Activated T-helper 1 cell treated with anti-CD3 and anti-CD28 coated beads, Interleukin-12 subunit alpha, Interleukin-12 subunit beta, Interleukin-2, Interleukin-4 antibody, amounts not matched to agents 30 ng/mL and 10 ng/mL and 1 ng/mL, durations not matched to agents 14 hours and 24 hours and 36 hours (primary cell): ENCODE measurements at regions of chr11 and their contacts with region 1.

Region 1: GRCh38 chr11:86291466-86292262 is 10.4 kb upstream of the HIKESHI start:
- DNase-seq: peak; percentile 39
- H3K4me3 Mint-ChIP-seq: peak overlapping the region; percentile 34
- H3K27ac Mint-ChIP-seq: peak overlapping the region; percentile 82
- H3K4me1 Mint-ChIP-seq: peaks cover 61% of the 10 kb centered on the region
- H3K27me3 Mint-ChIP-seq: no peaks in the 10 kb centered on the region

Region 2: DNA sequence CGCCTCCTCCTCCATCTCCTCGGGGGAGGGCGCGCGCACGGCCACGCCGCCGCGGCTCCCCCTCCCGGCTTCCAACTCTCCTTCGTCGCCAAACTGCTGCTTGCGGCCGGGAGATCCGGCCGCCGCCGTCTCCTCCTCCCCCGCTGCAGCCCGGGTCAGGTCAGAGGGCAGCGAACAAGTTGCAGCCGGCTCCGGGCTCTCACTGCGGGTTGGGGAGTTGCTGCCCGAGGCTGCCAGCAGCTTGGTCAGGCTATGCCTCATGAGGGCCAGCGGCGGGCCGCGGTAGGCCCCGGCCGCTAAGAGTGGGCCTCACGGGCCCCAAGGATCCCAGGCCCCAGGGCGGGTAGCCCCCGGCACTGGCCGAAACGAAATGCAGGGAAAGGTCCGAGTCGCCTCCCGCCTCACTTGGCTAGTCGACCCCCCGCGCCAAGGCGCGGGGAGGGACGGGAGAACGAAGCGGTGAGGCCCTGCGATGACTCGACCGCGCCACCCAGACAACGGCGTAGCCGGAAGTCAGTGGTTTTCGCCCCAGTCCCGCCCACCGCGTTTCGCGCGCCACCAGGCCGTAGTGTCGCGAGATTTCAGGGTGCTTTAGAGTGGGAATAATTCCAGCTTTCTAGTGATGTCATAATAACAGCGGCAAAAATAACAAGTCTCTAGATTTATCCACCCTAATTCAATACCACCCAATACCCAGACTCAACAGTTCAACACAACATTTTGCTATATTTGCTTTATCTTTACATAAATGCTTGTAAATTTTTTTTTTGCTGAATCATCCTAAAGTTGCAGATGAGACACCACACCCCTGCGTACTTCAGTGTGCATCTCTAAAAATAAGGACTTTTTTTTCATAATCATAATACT is 626.8 kb before region 1 on chr11 and contains the start of gene CREBZF:
- intact Hi-C with region 1: loop called (anchors 10 kb)
- DNase-seq: peak; percentile 94
- H3K4me3 Mint-ChIP-seq: peak within 1 kb of the TSS; percentile 99
- H3K27ac Mint-ChIP-seq: peak within 1 kb of the TSS; percentile 97
- H3K4me1 Mint-ChIP-seq: peaks cover 51% of the 10 kb centered on the region
- H3K27me3 Mint-ChIP-seq: no peaks in the 10 kb centered on the region
- total RNA-seq, gene CREBZF: 52.0 and 55.9 TPM in 2 replicates

Region 3: GRCh38 chr11:85941380-85941973 is 350.2 kb before region 1 on chr11:
- intact Hi-C with region 1: loop called (anchors 1 kb)
- DNase-seq: peak; percentile 11
- H3K4me3 Mint-ChIP-seq: no peak overlapping the region
- H3K27ac Mint-ChIP-seq: no peak overlapping the region
- H3K4me1 Mint-ChIP-seq: peaks cover 15% of the 10 kb centered on the region
- H3K27me3 Mint-ChIP-seq: no peaks in the 10 kb centered on the region

Region 4: GRCh38 chr11:86068951-86069407 is 222.7 kb before region 1 on chr11 and contains the start of gene PICALM:
- intact Hi-C with region 1: loop called (anchors 2 kb)
- DNase-seq: peak; percentile 97
- H3K4me3 Mint-ChIP-seq: peak within 1 kb of the TSS; percentile 92
- H3K27ac Mint-ChIP-seq: peak within 1 kb of the TSS; percentile 97
- H3K4me1 Mint-ChIP-seq: peaks cover 33% of the 10 kb centered on the region
- H3K27me3 Mint-ChIP-seq: no peaks in the 10 kb centered on the region
- total RNA-seq, gene PICALM: 174 and 177 TPM in 2 replicates

Region 5: DNA sequence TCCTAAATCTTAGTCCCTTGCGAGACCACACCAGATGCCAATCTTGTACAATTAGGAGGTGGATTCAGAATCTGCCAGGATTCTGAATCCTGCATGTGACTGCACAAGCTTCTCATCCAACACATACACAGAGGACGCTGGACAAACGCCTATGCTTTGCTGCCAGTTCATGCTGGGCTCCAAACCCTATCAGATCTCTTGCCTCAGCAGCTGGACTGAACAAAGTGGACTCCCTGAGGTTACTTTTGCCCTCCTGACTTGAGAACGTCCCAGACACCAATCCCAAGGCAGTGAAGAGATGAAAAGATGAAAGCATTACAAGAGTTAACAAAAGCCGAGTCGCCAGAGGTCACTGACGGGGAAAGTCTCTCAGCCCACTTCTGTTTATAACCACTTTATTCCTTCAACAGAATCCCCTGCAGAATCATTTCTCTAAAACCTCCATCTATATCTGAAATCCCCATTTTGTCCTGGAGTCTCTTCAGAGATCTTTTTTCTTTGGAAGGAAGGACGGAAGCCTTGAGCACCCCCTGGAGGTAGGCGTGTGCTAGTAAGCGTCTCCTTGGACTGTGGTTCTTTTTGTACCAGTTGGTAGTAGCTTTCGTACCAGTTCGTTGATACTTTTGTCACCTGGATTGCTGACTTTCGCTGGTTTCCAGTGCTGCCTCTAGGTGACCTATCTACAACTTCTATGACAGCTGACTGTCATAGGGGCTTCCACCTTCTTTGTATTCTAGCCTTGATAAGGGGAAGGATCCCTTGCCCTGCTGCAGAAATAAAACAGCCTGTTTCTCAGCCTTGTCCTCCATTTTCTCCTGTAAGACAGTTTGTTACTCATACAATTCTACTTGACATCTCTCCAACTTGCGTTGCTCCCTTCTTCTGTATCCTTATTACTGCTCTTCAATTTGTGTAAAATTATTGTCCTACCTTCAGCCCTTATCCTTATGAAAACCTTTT is 73.3 kb before region 1 on chr11:
- intact Hi-C with region 1: loop called (anchors 1 kb)
- DNase-seq: peak; percentile 42
- H3K4me3 Mint-ChIP-seq: peak overlapping the region; percentile 40
- H3K27ac Mint-ChIP-seq: peak overlapping the region; percentile 81
- H3K4me1 Mint-ChIP-seq: peaks cover 81% of the 10 kb centered on the region
- H3K27me3 Mint-ChIP-seq: no peaks in the 10 kb centered on the region

Region 6: DNA sequence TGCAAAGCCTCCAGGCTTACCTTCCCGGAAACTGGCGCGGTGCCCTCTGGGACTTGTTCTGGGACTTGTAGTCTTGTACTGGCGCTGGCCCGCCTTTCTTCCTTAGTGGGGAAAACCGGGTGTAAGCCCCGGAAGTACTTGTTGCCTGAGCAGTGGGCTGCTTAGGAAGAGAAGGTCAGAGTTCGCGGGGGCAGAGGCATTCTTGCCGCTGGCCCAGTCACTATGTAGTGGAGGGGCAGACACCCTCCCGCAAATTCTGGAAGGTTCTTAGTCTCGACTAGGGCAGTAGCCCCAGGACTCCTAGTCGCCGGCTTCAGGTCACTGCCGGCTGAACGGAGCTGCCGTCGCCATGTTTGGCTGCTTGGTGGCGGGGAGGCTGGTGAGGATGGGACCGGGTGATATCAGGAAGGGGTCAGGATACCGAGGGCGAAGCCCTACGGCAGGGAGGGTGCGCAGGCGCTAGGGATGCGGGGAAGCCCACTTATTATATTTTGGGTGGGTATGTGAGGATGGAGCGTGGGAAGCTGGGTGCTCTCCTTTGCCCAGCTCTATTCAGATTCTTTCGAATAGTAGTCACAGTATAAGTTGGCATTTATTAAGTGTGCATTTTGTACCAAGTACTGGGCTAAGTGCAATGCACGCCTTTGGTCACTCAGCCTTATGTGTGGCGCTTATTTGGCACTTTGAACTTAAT is 10.6 kb after region 1 on chr11 and contains the start of gene HIKESHI:
- intact Hi-C with region 1: loop called (anchors 1 kb)
- DNase-seq: peak; percentile 83
- H3K4me3 Mint-ChIP-seq: peak within 1 kb of the TSS; percentile 100
- H3K27ac Mint-ChIP-seq: peak within 1 kb of the TSS; percentile 97
- H3K4me1 Mint-ChIP-seq: peaks cover 28% of the 10 kb centered on the region
- H3K27me3 Mint-ChIP-seq: no peaks in the 10 kb centered on the region
- total RNA-seq, gene HIKESHI: 54.2 and 56.4 TPM in 2 replicates

Region 7: DNA sequence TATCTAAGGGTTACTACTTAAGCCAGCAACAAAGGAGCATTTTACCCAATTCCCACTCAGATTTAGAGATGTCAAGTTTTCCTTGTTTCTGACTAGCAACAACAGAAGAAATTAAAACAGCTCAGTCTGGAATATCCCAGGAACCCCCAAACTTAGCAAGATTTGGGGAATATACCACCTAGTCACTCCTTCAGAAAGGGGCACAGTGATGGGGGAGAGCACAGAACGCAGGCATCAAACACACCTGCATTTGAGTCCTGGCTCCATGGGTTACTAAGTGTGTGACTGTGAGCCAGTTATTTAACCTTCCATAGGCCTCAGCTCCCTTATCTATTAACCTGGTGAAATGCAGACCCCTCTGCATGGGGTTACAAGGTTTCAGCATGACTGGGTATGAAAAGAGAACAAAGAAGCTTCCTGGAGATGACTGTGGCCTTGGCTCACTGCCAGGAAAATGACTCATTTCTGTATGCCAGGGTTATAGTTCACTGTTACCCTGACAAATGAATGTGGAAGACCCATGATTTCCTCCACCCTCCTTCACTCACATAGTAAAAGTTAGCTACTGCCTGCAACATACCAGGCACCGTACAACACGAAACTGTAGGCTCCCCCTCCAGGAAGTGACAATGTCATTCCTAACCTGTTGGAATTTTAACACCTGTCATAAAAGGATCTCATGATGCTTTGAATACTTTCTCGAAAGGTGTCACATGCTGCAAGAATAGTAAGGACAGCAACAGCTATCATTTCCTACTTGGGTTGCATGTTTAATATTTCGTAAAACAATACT is 301.2 kb after region 1 on chr11:
- intact Hi-C with region 1: loop called (anchors 1 kb)
- DNase-seq: peak; percentile 81
- H3K4me3 Mint-ChIP-seq: peak overlapping the region; percentile 63
- H3K27ac Mint-ChIP-seq: peak overlapping the region; percentile 93
- H3K4me1 Mint-ChIP-seq: peaks cover 61% of the 10 kb centered on the region
- H3K27me3 Mint-ChIP-seq: no peaks in the 10 kb centered on the region